ENCODE measurements at regions of chr15 and their contacts with region 1.

Region 1: DNA sequence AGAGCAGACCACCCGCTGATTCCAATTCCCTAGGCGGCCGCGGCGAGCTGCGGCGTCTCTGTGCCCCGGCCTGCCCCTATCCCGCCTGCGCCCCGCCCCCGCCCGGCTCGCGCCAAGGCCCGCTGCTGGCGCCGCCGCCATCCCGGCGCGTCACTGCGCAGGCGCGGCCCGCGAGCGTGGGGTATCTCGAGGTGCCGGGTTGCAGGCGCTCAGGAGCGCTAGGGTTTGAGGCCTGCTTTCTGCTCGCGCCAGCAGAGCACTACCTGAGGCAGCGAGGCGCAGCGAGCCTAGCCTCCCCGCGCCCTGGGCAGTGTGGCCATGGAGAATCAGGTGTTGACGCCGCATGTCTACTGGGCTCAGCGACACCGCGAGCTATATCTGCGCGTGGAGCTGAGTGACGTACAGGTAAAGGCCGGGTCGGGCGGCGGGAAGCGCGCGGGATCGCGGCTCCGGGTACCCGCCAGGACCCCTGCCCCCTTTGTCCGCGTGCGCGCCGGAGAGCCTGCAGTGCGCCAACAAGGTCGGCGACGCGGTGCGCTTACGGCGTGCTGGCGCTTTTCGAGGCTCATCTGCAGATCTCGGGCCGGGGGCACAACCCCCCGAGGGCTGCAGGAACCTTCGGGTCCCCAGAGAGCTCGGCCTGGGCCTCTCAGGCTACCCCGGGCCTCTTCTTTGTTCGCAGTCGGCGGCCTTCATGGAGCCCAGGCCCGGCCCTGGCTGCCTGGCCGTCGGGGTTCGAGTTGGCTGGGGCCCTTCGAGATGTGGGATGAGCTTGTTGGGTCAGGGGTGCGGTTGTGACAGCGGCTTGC is at the start of gene HACD3:
- DNase-seq: peak; percentile 63 to 78
- ATAC-seq: peak; percentile 94 to 95
- H3K4me3 ChIP-seq: peak within 1 kb of the TSS; percentile 65 to 95 (median 88)
- H3K27ac ChIP-seq: peak within 1 kb of the TSS; percentile 73 to 90 (median 86)
- H3K4me1 ChIP-seq: peaks cover 18 to 20% of the 10 kb centered on the region in 2 donors
- H3K27me3 ChIP-seq: no peaks in the 10 kb centered on the region
- CTCF ChIP-seq: no peak
- POLR2A ChIP-seq: peak; percentile 57 to 58
- total RNA-seq, gene HACD3: 4.5 to 9.5 (median 6.5) TPM

Region 2: DNA sequence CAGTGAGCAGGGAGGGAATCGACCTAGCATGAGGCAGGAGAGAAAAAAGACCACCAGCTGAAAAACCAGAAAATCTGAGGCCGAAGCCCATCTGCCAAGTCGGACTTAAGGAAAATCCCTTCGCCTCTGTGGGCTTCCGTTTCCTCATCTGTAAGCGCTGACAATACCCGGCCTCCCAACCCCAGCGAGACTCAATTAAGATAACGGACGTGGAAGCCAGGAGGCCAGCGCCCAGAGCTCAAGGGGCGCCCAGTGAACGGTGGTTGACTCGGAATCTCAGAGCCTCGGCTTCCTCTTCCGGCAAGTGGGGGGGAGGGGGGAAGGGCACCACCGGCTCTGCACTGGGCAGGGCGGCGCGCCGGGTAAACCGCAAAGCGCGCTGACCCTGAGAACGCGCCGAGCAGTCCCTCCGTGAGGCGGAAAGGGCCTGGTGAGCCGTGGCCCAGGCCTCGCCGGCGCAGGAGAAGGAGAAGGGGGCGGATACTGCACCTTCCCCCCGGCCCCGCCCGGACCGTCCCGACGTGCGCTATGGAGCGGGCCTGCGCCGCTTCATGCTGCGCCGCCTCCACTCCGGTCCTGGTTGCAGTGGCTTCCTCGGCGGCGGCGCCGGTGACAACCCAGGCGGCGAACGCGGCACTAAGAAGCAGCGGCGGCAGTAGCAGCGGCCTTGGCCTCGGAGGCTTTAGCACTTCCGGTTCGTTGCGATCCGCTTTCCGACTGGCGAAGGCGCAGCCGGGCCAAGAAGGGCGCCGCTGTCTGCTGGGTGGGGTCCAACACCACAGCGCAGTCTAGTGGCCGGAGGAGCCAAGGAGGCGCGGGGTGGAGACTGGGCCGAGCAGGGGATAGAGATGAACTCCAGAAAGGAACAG is 13.3 kb before region 1 on chr15 and contains the start of gene DPP8:
- in situ Hi-C with region 1: no loop called
- intact Hi-C with region 1: loop called (anchors 2 kb)
- DNase-seq: peak; percentile 87 to 90
- ATAC-seq: peak; percentile 95 to 97
- H3K4me3 ChIP-seq: peak within 1 kb of the TSS; percentile 95 to 100 (median 99)
- H3K27ac ChIP-seq: peak within 1 kb of the TSS; percentile 82 to 96 (median 96)
- H3K4me1 ChIP-seq: peaks cover 35 to 42% of the 10 kb centered on the region in 2 donors
- H3K27me3 ChIP-seq: no peaks in the 10 kb centered on the region
- CTCF ChIP-seq: peak; percentile 74 to 93 (median 79)
- POLR2A ChIP-seq: peak; percentile 39 to 64
- total RNA-seq, gene DPP8: 36.9 to 76.6 (median 48.0) TPM

Region 3: DNA sequence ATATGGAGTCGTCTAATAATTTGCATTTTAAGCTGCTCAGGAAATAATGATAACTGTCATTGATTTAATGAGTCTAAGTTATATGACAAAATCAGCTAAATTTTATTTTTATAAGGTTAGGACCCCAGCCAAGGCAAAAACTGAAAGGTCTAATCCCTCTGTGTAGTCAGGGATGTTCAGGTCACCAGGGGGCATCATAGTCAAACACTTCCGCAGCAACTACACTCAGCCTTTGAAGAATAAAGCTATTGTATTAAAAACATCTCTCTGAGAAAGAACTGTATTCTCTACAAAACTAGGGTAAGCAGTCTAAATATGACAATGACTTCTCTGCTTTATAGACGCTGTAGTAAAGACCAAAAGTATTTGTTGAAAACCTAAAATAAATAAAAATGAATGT is 65.4 kb after region 1 on chr15:
- in situ Hi-C with region 1: no loop called
- intact Hi-C with region 1: no loop called
- DNase-seq: no peak
- ATAC-seq: no peak
- H3K4me3 ChIP-seq: no peak overlapping the region
- H3K27ac ChIP-seq: no peak overlapping the region
- H3K4me1 ChIP-seq: no peaks in the 10 kb centered on the region
- H3K27me3 ChIP-seq: no peaks in the 10 kb centered on the region
- CTCF ChIP-seq: no peak
- POLR2A ChIP-seq: no peak